Activated naive CD4-positive, alpha-beta T cell treated with anti-CD3 and anti-CD28 coated beads for 36 hours (primary cell): ENCODE measurements at regions of chr19 and their contacts with region 1.

Region 1: DNA sequence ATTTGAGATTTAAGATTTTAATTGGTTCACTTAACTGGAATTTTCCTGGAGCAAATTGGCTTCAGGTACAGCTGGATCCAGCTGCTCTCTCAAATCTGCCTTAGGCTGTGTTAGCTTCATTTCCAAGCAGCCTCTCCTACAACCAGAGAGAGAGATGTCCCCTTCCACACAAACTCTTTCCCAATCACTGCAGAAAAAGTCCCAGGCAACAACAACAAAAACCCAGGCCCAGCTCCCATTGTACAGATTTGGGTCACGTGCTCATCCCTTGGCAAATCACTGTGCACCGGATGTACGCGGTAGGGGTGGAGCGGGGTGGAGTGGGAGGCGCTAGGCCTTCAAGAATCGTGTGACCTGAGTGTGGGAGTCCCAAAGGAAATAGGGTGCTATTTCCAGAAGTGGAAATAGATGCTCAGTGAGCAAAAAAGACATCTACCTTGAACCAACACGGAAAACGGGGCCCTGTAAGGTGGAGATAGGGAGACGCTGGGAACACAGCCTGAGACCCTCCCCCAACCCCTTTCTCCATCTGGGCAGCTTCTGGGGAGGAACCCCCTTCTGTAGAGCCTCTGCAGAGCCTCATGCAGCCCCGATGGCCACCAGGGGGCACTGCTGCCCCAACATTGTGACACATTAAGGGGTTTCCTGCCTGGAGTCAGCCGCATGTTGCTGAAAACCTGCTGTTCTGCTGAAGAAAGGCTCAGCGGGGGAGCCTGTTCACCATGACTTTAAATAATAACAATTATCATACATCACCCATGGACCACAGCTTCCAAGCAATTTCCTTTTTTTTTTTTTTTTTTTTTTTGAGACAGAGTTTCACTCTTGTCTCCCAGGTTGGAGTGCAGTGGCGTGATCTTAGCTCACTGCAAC is 25.4 kb downstream of the HPN start:
- DNase-seq: peak; percentile 96
- H3K4me3 Mint-ChIP-seq: peak overlapping the region; percentile 22
- H3K27ac Mint-ChIP-seq: peak overlapping the region; percentile 46
- H3K4me1 Mint-ChIP-seq: peaks cover 24% of the 10 kb centered on the region
- H3K27me3 Mint-ChIP-seq: no peaks in the 10 kb centered on the region

Region 2: DNA sequence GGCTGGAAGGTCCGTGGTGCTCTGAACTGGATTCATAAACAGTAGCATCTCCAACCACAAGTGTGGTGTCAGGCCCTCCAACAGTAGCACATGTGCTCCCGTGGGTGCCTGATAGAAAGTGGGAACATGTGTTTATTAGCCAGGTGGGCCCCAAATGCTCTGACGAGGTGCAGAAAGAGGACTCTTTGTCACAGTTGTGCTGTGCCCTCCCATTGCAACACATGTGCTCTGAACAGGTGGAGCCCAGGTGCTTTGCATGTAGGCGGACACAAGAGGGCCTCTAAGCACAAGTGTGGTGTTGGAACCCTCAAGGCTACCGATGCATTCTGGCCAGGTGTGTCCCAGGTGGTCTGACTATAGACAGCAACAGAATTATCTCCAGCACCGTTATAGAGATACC is 215.6 kb before region 1 on chr19:
- CTCF ChIA-PET with region 1: no interaction called
- intact Hi-C with region 1: no loop called
- DNase-seq: no peak
- H3K4me3 Mint-ChIP-seq: no peak overlapping the region
- H3K27ac Mint-ChIP-seq: no peak overlapping the region
- H3K4me1 Mint-ChIP-seq: peaks cover 10% of the 10 kb centered on the region
- H3K27me3 Mint-ChIP-seq: no peaks in the 10 kb centered on the region

Region 3: DNA sequence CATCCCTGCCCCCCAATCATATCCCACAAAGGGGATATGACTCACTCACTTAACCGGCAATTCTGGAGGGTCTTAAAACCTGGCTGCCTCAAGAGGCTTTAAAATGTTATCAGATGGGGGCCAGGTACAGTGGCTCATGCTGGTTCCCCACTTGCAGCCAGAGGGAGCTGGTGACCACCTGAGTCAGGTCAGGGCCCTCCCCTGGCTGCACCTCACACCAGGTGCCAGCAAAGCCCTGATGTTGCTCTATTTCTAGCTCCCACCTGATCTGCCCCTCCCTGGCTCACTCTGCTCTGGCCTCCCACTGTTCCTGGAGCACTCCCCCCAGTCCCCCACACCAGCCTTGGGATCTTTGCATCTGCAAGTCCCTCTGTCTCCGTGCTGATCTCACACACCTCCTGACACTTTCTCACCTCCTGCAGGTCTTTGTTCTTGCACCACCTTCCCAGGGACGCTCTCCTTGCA is 11.2 kb before region 1 on chr19:
- CTCF ChIA-PET with region 1: interaction called, 12 read pairs
- intact Hi-C with region 1: no loop called
- DNase-seq: peak; percentile 50
- H3K4me3 Mint-ChIP-seq: no peak overlapping the region
- H3K27ac Mint-ChIP-seq: no peak overlapping the region
- H3K4me1 Mint-ChIP-seq: no peaks in the 10 kb centered on the region
- H3K27me3 Mint-ChIP-seq: no peaks in the 10 kb centered on the region

Region 4: DNA sequence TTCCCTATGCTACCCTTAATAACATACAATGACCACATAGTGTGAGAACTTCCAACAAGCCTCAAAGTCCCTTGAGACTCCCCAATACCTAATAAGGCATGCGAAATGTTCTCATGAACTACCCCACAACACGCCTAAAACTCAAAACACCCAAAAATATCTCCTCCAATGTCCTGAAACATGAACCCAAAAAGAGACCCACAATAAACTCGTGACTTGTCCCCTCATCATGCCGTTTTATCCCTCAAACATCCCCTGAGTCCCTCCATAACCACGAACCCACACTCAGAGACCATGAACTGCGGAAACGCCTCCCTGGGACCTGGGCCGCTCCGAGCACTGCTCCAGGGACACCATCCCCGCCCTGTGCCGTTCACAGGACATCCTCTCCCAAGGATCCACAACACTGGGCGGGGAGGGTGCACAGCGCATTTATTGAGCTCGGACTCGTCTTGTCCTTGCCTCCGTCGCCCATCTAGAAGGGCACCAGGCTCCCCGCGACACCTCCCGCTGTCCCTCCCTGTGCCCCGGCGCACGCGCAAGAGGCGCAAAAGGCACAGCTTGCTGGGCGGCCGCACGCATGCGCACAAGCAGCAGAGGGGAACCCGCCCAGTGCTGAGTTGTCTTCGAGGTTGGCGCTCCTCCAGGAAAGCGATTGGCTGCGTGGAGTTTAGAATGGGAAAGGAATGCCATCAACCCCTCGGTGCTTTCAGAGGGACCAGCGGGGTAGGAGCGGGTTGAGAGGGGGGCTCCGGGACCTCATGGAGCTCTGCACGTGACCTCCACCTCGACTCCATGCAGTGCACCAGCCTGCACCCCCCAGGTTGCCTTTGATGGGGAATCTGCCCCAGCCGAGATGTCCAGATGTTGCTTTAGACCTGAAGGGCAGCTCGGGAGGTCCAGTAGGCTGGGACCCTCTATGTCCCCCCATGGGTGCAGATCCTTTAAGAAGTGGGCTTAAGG is 57.5 kb after region 1 on chr19:
- CTCF ChIA-PET with region 1: interaction called, 10 read pairs
- intact Hi-C with region 1: loop called (anchors 5 kb)
- DNase-seq: peak; percentile 90
- H3K4me3 Mint-ChIP-seq: peak overlapping the region; percentile 89
- H3K27ac Mint-ChIP-seq: peak overlapping the region; percentile 64
- H3K4me1 Mint-ChIP-seq: peaks cover 13% of the 10 kb centered on the region
- H3K27me3 Mint-ChIP-seq: no peaks in the 10 kb centered on the region

Region 5: DNA sequence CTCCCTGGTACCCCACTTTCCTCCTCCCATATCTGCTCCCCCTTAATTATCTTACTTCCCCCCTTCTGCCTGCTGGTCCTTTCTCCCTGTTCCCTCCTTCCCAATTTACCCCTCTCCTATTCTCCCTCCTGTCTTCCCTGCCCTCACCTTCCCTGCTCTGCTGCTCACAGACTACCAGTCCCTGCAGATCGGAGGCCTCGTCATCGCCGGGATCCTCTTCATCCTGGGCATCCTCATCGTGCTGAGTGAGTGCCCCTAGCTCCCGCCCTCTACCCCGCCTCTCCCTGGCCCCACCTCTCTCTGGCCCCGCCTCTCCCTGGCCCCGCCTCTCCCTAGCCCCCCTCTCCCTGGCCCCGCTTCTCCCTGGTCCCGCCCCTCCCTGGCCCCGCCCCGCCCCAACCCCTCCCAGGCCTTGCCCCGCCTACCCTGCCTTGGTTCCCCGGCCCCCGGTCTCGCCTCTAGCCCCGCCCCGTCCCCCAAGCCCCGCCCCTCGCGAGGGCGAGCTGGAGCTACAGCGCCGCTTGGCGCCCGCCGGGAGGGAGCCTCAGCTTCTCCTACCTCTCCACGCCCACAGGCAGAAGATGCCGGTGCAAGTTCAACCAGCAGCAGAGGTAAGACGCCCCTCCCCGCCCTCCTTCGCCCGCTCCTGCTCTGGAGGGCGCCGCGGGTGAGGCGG is 74.2 kb after region 1 on chr19:
- CTCF ChIA-PET with region 1: interaction called, 35 read pairs
- intact Hi-C with region 1: loop called (anchors 1 kb)
- DNase-seq: peak; percentile 98
- H3K4me3 Mint-ChIP-seq: peak overlapping the region; percentile 74
- H3K27ac Mint-ChIP-seq: no peak overlapping the region
- H3K4me1 Mint-ChIP-seq: peaks cover 30% of the 10 kb centered on the region
- H3K27me3 Mint-ChIP-seq: peaks cover 4% of the 10 kb centered on the region

Region 6: GRCh38 chr19:35206379-35206778 is 139.5 kb after region 1 on chr19:
- CTCF ChIA-PET with region 1: no interaction called
- intact Hi-C with region 1: loop called (anchors 1 kb)
- DNase-seq: peak; percentile 65
- H3K4me3 Mint-ChIP-seq: no peak overlapping the region
- H3K27ac Mint-ChIP-seq: peak overlapping the region; percentile 92
- H3K4me1 Mint-ChIP-seq: peaks cover 75% of the 10 kb centered on the region
- H3K27me3 Mint-ChIP-seq: no peaks in the 10 kb centered on the region

Region 7: GRCh38 chr19:35269421-35270117 is 202.6 kb after region 1 on chr19:
- CTCF ChIA-PET with region 1: no interaction called
- intact Hi-C with region 1: loop called (anchors 5 kb)
- DNase-seq: peak; percentile 86
- H3K4me3 Mint-ChIP-seq: peak overlapping the region; percentile 70
- H3K27ac Mint-ChIP-seq: peak overlapping the region; percentile 66
- H3K4me1 Mint-ChIP-seq: peaks cover 28% of the 10 kb centered on the region
- H3K27me3 Mint-ChIP-seq: no peaks in the 10 kb centered on the region

Region 8: GRCh38 chr19:35380450-35381124 is 313.7 kb after region 1 on chr19:
- CTCF ChIA-PET with region 1: no interaction called
- intact Hi-C with region 1: no loop called
- DNase-seq: no peak
- H3K4me3 Mint-ChIP-seq: no peak overlapping the region
- H3K27ac Mint-ChIP-seq: no peak overlapping the region
- H3K4me1 Mint-ChIP-seq: peaks cover 3% of the 10 kb centered on the region
- H3K27me3 Mint-ChIP-seq: peaks cover 13% of the 10 kb centered on the region